ENCODE measurements at regions of chr20 and their contacts with region 1.

Region 1: GRCh38 chr20:59560588-59561227 is 43.6 kb upstream of the PHACTR3 start:
- DNase-seq: peak; percentile 76
- H3K4me3 ChIP-seq: no peak overlapping the region
- H3K27ac ChIP-seq: no peak overlapping the region
- H3K4me1 ChIP-seq: peaks cover 0 to 7% of the 10 kb centered on the region in 2 experiments; a peak in 1 of 4 replicates
- H3K27me3 ChIP-seq: no peaks in the 10 kb centered on the region
- CTCF ChIP-seq: peak; percentile 64
- EP300 ChIP-seq: no peak
- RAD21 ChIP-seq: peak; percentile 20; the same call in 1 of the 2 replicates

Region 2: GRCh38 chr20:59547596-59547995 is 13.1 kb before region 1 on chr20:
- CTCF ChIA-PET with region 1: interaction called, 36 read pairs
- POLR2A ChIA-PET with region 1: no interaction called
- DNase-seq: no peak
- H3K4me3 ChIP-seq: no peak overlapping the region
- H3K27ac ChIP-seq: no peak overlapping the region
- H3K4me1 ChIP-seq: no peaks in the 10 kb centered on the region
- H3K27me3 ChIP-seq: no peaks in the 10 kb centered on the region
- CTCF ChIP-seq: no peak
- EP300 ChIP-seq: no peak
- RAD21 ChIP-seq: no peak

Region 3: DNA sequence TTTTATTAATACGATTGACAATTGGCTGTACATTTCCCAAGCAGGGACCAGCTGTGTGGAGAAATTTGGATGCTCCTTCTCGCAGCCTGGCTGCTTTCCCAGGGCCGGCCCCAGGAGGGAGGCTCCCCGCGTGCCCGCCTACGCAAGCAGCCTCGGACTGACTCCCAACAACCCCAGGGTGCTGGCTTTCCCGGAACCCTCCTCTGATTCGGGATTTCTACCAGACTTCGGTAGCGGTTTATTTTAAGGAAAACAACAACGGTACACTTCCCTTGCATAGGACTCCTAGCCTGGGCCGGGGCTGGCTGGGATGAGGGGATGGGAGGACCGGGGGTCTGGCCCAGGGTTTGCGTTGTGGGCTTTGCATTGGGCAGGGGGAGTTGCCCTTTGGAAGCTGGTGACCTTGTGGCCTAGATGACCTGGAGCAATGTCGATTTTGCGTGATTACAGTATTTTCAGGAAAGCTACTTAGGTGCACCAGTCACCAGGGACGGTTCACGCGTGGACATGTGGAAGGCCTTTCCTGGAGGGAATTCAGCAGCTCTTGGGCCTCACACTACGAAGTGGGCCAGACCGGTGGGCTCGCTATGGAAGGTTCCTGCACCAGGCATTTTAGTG is 22.8 kb after region 1 on chr20:
- CTCF ChIA-PET with region 1: interaction called, 18 read pairs
- POLR2A ChIA-PET with region 1: no interaction called
- DNase-seq: no peak
- H3K4me3 ChIP-seq: no peak overlapping the region
- H3K27ac ChIP-seq: no peak overlapping the region
- H3K4me1 ChIP-seq: peaks cover 0 to 14% of the 10 kb centered on the region in 2 experiments; a peak in 3 of 4 replicates
- H3K27me3 ChIP-seq: no peaks in the 10 kb centered on the region
- CTCF ChIP-seq: no peak
- EP300 ChIP-seq: no peak
- RAD21 ChIP-seq: no peak

Region 4: DNA sequence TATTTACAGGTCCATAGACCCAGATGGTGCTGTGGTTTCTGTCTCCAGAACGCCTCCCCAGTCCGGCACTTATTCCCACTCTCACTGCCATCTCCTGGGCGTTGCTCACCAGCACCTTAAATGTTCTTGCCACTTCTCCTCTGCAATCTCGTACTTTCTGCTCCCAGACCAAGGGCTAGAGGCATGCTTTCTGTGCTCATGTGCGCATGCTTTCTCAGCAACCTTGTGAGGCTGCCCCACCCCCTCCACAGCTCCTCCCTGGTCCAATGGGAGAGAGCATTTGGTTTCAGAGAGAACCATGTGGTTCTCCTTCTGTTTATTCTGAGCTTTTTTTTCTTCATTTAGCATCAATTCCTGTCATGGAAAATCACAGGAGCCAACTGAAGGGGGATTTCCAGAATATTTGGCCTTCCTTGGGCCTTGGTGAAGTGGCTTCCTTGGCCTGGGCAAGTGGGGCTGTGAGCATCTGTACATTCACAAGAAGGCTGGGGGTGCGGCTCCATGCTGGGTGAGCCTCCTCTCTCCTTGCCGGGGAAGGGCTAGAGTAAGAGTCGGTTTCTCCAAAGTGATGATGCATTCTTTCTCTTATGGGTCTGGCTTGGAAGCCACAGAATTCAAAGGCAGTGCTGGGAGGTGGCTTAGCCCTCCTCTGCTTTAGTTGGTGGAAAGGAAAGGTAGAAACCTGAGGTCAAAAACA is 110.2 kb after region 1 on chr20:
- CTCF ChIA-PET with region 1: no interaction called
- POLR2A ChIA-PET with region 1: no interaction called
- DNase-seq: no peak
- H3K4me3 ChIP-seq: no peak overlapping the region
- H3K27ac ChIP-seq: no peak overlapping the region
- H3K4me1 ChIP-seq: peaks cover 0 to 7% of the 10 kb centered on the region in 2 experiments; a peak in 1 of 4 replicates
- H3K27me3 ChIP-seq: no peaks in the 10 kb centered on the region
- CTCF ChIP-seq: no peak
- EP300 ChIP-seq: no peak
- RAD21 ChIP-seq: no peak

Measured in SK-N-SH (cell line).